HepG2 (cell line): ENCODE measurements at regions of chrX and their contacts with region 1.

Region 1: GRCh38 chrX:47030339-47030738 is 47.9 kb upstream of the RGN start:
- DNase-seq: peak; percentile 53
- ATAC-seq: no peak
- H3K4me3 ChIP-seq: no peak overlapping the region
- H3K27ac ChIP-seq: no peak overlapping the region
- H3K4me1 ChIP-seq: no peaks in the 10 kb centered on the region
- H3K27me3 ChIP-seq: no peaks in the 10 kb centered on the region
- CTCF ChIP-seq: peak; percentile 54
- EP300 ChIP-seq: no peak
- POLR2A ChIP-seq: no peak
- RAD21 ChIP-seq: peak; percentile 18; the same call in 1 of the 2 replicates

Region 2: GRCh38 chrX:47093248-47093647 is 62.9 kb after region 1 on chrX:
- CTCF ChIA-PET with region 1: interaction called, 9 read pairs
- POLR2A ChIA-PET with region 1: no interaction called
- in situ Hi-C with region 1: no loop called
- intact Hi-C with region 1: loop called (anchors 5 kb)
- DNase-seq: no peak
- ATAC-seq: no peak
- H3K4me3 ChIP-seq: no peak overlapping the region
- H3K27ac ChIP-seq: no peak overlapping the region
- H3K4me1 ChIP-seq: peaks cover 27% of the 10 kb centered on the region
- H3K27me3 ChIP-seq: no peaks in the 10 kb centered on the region
- CTCF ChIP-seq: peak; percentile 47
- EP300 ChIP-seq: no peak
- POLR2A ChIP-seq: no peak
- RAD21 ChIP-seq: no peak

Region 3: GRCh38 chrX:47129157-47129898 is 99.0 kb after region 1 on chrX:
- CTCF ChIA-PET with region 1: no interaction called
- POLR2A ChIA-PET with region 1: no interaction called
- in situ Hi-C with region 1: no loop called
- intact Hi-C with region 1: no loop called
- DNase-seq: peak; percentile 90
- ATAC-seq: peak; percentile 99
- H3K4me3 ChIP-seq: peak overlapping the region; percentile 58 to 75 (median 65)
- H3K27ac ChIP-seq: peak overlapping the region; percentile 73
- H3K4me1 ChIP-seq: no peaks in the 10 kb centered on the region
- H3K27me3 ChIP-seq: no peaks in the 10 kb centered on the region
- CTCF ChIP-seq: no peak
- EP300 ChIP-seq: no peak
- POLR2A ChIP-seq: peak; percentile 35 to 47; a peak in 3 of 4 replicates
- RAD21 ChIP-seq: no peak

Region 4: DNA sequence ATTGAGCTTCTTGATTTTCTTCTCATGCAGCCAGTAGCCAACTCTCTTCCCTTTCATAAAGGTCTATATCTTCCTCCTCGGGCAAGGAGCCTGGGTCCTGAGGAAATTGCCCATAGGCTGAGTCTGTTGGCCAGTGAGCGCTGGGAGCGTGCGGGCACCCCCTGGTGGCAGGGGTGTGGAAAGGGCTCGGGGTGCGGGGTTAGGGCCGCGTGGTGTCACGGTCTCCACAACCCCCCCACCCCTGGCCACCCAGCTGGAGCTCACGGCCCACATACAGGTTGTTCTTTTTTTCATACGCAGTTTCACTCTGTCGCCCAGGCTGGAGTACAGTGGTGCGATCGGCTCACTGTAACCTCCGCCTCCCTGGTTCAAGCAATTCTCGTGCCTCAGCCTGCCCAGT is 127.8 kb after region 1 on chrX:
- CTCF ChIA-PET with region 1: no interaction called
- POLR2A ChIA-PET with region 1: no interaction called
- in situ Hi-C with region 1: no loop called
- intact Hi-C with region 1: no loop called
- DNase-seq: no peak
- ATAC-seq: peak; percentile 53; the same call in 2 of the 3 replicates
- H3K4me3 ChIP-seq: no peak overlapping the region
- H3K27ac ChIP-seq: no peak overlapping the region
- H3K4me1 ChIP-seq: peaks cover 25% of the 10 kb centered on the region
- H3K27me3 ChIP-seq: no peaks in the 10 kb centered on the region
- CTCF ChIP-seq: peak; percentile 29
- EP300 ChIP-seq: no peak
- POLR2A ChIP-seq: no peak
- RAD21 ChIP-seq: no peak

Region 5: DNA sequence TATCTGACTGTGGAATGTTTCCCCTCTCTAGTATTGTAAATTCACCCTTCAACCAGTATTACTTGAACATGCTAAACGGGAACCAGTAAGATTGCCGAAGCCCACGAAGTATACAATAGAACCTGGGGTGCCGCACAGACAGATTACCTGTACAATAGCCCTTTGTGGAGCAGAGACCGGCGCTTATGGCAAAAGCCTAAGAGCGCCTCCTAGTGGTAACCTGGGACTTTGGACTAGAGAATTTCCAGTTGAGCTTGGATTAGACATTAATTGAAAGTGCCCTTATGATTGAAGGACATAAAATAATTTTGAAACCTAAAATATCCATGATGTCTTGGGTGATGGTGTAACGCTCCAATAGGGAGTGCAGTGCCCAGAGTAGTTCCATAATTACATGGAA is 354.2 kb after region 1 on chrX:
- CTCF ChIA-PET with region 1: no interaction called
- POLR2A ChIA-PET with region 1: no interaction called
- in situ Hi-C with region 1: no loop called
- intact Hi-C with region 1: no loop called
- DNase-seq: peak; percentile 64
- ATAC-seq: peak; percentile 73
- H3K4me3 ChIP-seq: peak overlapping the region in 1 of 3 experiments; percentile 30; a peak in 2 of 6 replicates
- H3K27ac ChIP-seq: no peak overlapping the region
- H3K4me1 ChIP-seq: peaks cover 6% of the 10 kb centered on the region; the same call in 1 of the 2 replicates
- H3K27me3 ChIP-seq: no peaks in the 10 kb centered on the region
- CTCF ChIP-seq: peak; percentile 72
- EP300 ChIP-seq: no peak
- POLR2A ChIP-seq: no peak
- RAD21 ChIP-seq: no peak